Activated CD8-positive, alpha-beta T cell treated with anti-CD3 and anti-CD28 coated beads for 36 hours (primary cell): ENCODE measurements at regions of chr20 and their contacts with region 1.

Region 1: DNA sequence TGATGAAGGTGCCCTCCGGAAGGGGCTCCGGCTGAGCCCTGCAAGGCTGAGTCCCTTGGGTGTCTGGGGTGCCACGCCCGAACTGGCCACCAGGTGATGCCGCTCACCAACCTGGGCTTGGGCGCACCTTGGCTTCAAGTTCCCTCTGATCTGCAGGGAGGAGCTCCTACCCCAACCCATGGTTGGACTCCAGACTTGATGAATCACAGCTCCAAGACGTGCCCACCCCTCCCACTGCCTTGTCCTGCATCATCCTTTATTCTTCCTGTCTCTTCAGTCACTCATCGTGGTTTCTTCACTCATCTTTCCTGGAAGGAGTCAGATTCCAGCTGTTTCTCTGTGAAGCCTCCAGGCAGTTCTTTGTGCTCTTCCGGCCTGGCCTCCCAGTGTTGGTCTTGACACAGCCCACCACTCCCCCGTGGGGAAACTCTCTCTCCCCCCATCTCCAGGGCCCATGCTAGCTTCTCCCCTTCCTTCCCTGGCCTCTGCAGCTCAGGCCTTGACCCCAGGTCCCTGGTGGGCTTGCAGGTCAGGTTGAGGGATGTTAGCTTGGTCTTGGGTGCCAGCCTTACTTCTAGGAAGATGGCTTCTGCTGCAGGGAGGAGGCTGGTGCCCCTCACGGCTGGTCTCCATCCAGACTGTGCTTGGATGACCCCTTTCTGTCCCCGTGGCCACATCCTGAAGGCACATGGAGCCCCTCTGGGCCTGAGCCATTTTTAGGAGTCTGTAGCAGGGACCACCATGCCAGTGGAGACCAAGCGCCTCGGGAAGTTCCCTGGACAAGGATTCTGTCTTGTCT is 2.6 kb upstream of the ZBP1 start:
- DNase-seq: peak; percentile 83
- ATAC-seq: peak; percentile 17
- H3K4me3 Mint-ChIP-seq: no peak overlapping the region
- H3K27ac Mint-ChIP-seq: no peak overlapping the region
- H3K4me1 Mint-ChIP-seq: peaks cover 63% of the 10 kb centered on the region
- H3K27me3 Mint-ChIP-seq: no peaks in the 10 kb centered on the region
- CTCF ChIP-seq: peak; percentile 69

Region 2: GRCh38 chr20:57398231-57398821 is 224.5 kb before region 1 on chr20:
- CTCF ChIA-PET with region 1: no interaction called
- POLR2A ChIA-PET with region 1: interaction called, 9 read pairs
- intact Hi-C with region 1: loop called (anchors 2 kb)
- DNase-seq: peak; percentile 97
- ATAC-seq: peak; percentile 73
- H3K4me3 Mint-ChIP-seq: peak overlapping the region; percentile 84
- H3K27ac Mint-ChIP-seq: peak overlapping the region; percentile 99
- H3K4me1 Mint-ChIP-seq: peaks cover 90% of the 10 kb centered on the region
- H3K27me3 Mint-ChIP-seq: no peaks in the 10 kb centered on the region
- CTCF ChIP-seq: no peak

Region 3: DNA sequence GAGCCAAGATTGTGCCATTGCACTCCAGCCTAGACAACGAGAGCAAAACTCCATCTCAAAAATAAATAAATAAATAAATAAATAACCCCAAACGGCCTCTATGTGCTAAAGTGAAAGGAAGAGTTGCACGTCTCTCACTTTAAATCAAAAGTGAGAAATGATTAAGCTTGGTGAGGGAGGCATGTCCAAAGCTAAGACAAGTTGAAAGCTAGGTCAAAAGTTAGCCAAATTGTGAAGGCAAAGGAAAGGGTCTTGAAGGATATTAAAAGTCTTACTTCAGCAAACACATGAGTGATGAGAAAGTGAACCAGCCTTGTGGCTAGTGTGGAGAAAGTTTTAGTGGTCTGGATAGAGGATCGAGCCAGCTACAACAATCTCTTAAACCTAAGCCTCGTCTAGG is 16.9 kb before region 1 on chr20:
- CTCF ChIA-PET with region 1: interaction called, 12 read pairs
- POLR2A ChIA-PET with region 1: interaction called, 5 read pairs
- intact Hi-C with region 1: no loop called
- DNase-seq: no peak
- ATAC-seq: no peak
- H3K4me3 Mint-ChIP-seq: no peak overlapping the region
- H3K27ac Mint-ChIP-seq: no peak overlapping the region
- H3K4me1 Mint-ChIP-seq: peaks cover 18% of the 10 kb centered on the region
- H3K27me3 Mint-ChIP-seq: no peaks in the 10 kb centered on the region
- CTCF ChIP-seq: no peak

Region 4: DNA sequence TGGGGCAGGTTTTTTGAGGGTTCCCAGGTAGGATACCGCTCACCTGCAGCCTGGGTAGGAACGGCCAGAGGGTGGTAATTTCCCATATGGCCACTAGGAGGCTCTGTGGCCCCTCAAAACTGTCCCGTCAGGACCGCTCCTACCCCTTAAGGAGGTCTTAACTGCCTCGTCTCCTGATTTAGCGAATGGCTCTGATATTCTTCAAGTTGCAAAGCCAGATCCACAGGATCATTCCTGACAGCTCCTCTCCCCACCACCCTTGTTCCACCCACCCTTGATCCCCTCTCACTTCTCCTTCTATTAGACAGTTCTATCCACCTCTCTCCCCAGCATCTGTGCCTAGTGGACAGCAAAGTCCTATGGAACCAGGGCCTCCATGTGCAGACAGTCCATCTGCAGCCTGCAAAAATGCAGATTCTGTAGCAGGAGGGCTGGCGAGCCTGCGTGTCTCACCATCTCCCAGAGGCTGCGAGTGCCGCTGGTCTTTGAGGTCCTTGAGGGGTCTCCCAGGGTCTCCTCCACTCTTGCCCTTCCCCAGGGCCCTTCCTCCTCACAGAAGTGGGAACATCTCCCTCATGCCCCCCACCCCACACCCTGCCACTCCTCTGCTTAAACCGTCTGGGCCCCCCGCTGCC is 31.7 kb after region 1 on chr20:
- CTCF ChIA-PET with region 1: interaction called, 13 read pairs
- POLR2A ChIA-PET with region 1: interaction called, 3 read pairs
- intact Hi-C with region 1: no loop called
- DNase-seq: peak; percentile 74
- ATAC-seq: peak; percentile 85
- H3K4me3 Mint-ChIP-seq: no peak overlapping the region
- H3K27ac Mint-ChIP-seq: no peak overlapping the region
- H3K4me1 Mint-ChIP-seq: peaks cover 26% of the 10 kb centered on the region
- H3K27me3 Mint-ChIP-seq: no peaks in the 10 kb centered on the region
- CTCF ChIP-seq: peak; percentile 88

Region 5: DNA sequence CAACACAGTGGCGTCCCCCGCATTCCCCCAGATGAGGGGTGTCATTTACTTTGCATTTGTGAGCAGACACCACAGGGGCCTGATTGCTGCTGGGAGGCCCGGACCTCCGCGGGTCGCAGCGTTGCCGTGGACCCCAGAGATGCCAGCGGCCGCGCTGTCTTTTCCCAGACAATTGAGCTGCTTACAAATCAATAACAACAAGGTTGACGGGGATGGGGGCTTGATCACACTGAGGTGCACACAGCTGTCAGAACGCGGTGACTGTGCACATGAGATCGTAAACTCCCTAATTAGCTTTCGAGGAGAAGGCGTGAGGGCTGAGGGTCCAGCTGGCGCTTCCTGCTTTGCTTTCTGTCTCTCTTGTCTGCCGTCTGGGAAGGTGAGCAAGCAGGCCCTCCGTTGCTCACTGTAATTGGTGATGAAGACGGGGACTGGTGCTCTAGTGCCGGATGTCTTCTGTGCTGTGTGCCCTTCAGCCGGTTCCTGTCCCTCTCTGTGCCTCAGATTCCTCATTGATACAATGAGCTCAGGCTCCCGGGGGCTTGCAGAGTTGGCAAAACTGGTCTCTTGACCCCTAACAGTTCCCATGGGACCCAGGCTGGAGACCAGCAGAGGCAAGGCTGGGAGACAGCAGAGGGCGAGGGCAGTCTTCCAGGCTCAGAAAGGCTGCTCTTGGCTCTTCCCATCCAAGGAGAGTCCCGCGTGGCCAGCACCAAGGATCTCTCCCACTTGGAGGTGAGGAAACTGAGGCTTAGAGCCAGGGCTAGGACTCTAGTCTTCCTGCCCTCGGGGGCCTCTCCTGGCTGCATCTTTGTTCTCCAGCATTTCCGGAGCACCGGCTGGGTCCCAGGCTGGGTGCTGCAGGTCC is 213.0 kb after region 1 on chr20:
- CTCF ChIA-PET with region 1: no interaction called
- POLR2A ChIA-PET with region 1: no interaction called
- intact Hi-C with region 1: no loop called
- DNase-seq: no peak
- ATAC-seq: no peak
- H3K4me3 Mint-ChIP-seq: no peak overlapping the region
- H3K27ac Mint-ChIP-seq: no peak overlapping the region
- H3K4me1 Mint-ChIP-seq: no peaks in the 10 kb centered on the region
- H3K27me3 Mint-ChIP-seq: no peaks in the 10 kb centered on the region
- CTCF ChIP-seq: no peak

Region 6: GRCh38 chr20:58087193-58087858 is 464.5 kb after region 1 on chr20:
- CTCF ChIA-PET with region 1: no interaction called
- POLR2A ChIA-PET with region 1: no interaction called
- intact Hi-C with region 1: no loop called
- DNase-seq: peak; percentile 23
- ATAC-seq: no peak
- H3K4me3 Mint-ChIP-seq: no peak overlapping the region
- H3K27ac Mint-ChIP-seq: no peak overlapping the region
- H3K4me1 Mint-ChIP-seq: no peaks in the 10 kb centered on the region
- H3K27me3 Mint-ChIP-seq: peaks cover 11% of the 10 kb centered on the region
- CTCF ChIP-seq: peak; percentile 80